T-cell (primary cell): ENCODE measurements at regions of chrX and their contacts with region 1.

Region 1: DNA sequence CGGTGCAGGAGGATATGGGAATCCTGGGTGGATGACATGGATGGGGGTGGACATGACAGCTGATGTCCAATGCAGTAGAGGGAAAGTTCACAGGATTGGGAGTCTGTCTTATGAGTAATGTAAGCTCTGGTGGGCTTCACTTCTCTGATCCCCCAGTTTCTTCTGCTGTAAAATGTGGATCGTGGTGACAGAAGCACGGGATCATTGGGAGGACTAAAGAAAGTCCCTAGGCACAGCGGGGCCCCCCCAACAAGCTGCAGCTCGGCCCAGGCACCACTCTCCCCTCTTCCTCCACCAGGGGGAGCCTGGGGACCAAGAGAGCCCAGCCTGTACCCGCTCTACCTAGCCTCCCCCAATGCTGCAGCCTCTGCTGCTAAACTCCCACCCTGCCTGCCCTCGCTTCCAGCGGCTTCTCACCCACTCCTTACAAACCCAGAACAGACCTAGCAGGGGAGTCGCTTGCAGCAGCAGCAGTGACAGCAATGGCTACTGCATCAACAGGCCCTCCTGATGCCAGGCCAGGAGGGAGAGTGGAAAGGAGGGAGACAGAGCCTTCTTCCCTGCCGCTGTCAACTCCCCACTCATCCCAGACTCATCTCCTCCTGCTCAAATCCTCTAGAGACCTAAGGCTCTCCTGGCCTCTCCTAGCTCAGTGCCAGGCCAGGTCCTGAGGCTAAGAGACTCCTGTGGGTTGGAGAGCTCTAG is 36.1 kb upstream of the IQSEC2 start:
- DNase-seq: peak; percentile 48 to 78 (median 62)
- ATAC-seq: peak; percentile 71 to 83 (median 74)
- H3K4me3 ChIP-seq: no peak overlapping the region
- H3K4me3 Mint-ChIP-seq: no peak overlapping the region
- H3K27ac ChIP-seq: no peak overlapping the region
- H3K27ac Mint-ChIP-seq: no peak overlapping the region
- H3K4me1 ChIP-seq: peaks cover 0 to 25% of the 10 kb centered on the region in 2 experiments
- H3K4me1 Mint-ChIP-seq: peaks cover 20 to 34% (median 22%) of the 10 kb centered on the region in 3 donors
- H3K27me3 ChIP-seq: peaks cover 5 to 40% of the 10 kb centered on the region in 2 experiments
- H3K27me3 Mint-ChIP-seq: peaks cover 33 to 50% of the 10 kb centered on the region in 2 donors

Region 2: GRCh38 chrX:53116101-53116500 is 201.4 kb before region 1 on chrX:
- CTCF ChIA-PET with region 1: interaction called in 1 of 2 experiments, 12 read pairs
- POLR2A ChIA-PET with region 1: no interaction called
- DNase-seq: no peak
- ATAC-seq: no peak
- H3K4me3 ChIP-seq: no peak overlapping the region
- H3K4me3 Mint-ChIP-seq: no peak overlapping the region
- H3K27ac ChIP-seq: no peak overlapping the region
- H3K27ac Mint-ChIP-seq: no peak overlapping the region
- H3K4me1 ChIP-seq: no peaks in the 10 kb centered on the region
- H3K4me1 Mint-ChIP-seq: peaks cover 0 to 8% (median 4%) of the 10 kb centered on the region in 3 donors
- H3K27me3 ChIP-seq: no peaks in the 10 kb centered on the region
- H3K27me3 Mint-ChIP-seq: no peaks in the 10 kb centered on the region

Region 3: DNA sequence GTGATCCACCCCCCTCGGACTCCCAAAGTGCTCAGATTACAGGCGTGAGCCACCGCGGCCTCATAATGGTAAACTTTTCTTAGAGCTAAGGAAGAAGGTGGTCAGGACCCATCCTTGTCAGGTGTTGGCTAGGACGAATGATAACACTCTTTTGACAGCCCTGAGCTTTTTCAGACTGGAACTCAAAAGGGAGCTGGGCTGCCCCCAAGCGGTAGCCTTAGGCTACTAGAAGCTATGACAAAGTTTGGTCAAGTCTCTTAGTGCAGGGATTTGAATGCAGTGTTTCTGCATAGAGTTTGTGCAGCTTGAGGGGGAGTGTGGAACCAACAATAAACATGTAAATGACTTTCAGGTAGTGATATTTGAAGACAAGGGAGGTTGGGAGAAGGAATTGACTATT is 128.5 kb after region 1 on chrX:
- CTCF ChIA-PET with region 1: interaction called, 3 to 10 read pairs
- POLR2A ChIA-PET with region 1: interaction called in 1 of 2 experiments, 3 read pairs
- DNase-seq: peak in 26 of 35 experiments; percentile 7 to 56 (median 34)
- ATAC-seq: peak in 2 of 4 experiments; percentile 29 to 50
- H3K4me3 ChIP-seq: no peak overlapping the region
- H3K4me3 Mint-ChIP-seq: no peak overlapping the region
- H3K27ac ChIP-seq: no peak overlapping the region
- H3K27ac Mint-ChIP-seq: no peak overlapping the region
- H3K4me1 ChIP-seq: peaks cover 0 to 12% of the 10 kb centered on the region in 2 experiments
- H3K4me1 Mint-ChIP-seq: peaks cover 0 to 10% (median 5%) of the 10 kb centered on the region in 3 donors
- H3K27me3 ChIP-seq: peaks cover 0 to 4% of the 10 kb centered on the region in 2 experiments
- H3K27me3 Mint-ChIP-seq: peaks cover 0 to 8% of the 10 kb centered on the region in 2 donors

Region 4: DNA sequence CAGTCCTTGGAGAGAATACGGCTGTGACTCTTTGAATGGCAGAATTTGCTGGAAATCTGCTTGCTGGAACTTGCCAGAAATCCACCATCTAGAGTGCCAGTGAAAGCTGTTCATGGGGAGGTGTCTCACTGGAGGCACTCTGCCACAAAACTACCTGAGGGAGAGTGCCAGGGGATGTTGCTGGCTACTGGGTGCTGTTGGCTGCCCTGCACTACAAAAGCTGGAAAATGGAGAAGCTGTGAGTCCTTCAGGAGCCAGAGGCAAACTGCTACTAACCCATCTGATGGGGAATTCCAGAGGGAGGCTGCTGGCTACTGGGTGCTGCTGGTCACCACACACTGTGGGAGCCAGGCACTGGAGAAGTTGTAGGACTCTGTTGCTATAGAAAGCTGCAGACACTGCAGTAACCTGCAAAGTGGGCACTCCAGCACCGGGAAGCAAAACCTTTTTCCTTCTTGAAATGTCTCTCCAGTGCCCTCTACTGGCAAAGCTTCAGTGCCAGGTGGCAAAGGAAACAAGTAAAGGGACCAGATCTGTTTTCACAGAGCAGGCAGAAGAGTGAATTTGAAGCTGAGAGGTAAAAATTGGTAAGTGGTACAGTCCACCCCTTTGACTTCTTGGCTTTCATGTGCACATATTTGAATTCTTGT is 164.4 kb after region 1 on chrX:
- CTCF ChIA-PET with region 1: interaction called, 10 to 16 read pairs
- POLR2A ChIA-PET with region 1: no interaction called
- DNase-seq: peak in 33 of 35 experiments; percentile 2 to 68 (median 27)
- ATAC-seq: peak in 3 of 4 experiments; percentile 30 to 37 (median 35)
- H3K4me3 ChIP-seq: no peak overlapping the region
- H3K4me3 Mint-ChIP-seq: no peak overlapping the region
- H3K27ac ChIP-seq: no peak overlapping the region
- H3K27ac Mint-ChIP-seq: no peak overlapping the region
- H3K4me1 ChIP-seq: peaks cover 0 to 3% of the 10 kb centered on the region in 2 experiments
- H3K4me1 Mint-ChIP-seq: peaks cover 0 to 7% (median 0%) of the 10 kb centered on the region in 3 donors
- H3K27me3 ChIP-seq: peaks cover 0 to 9% of the 10 kb centered on the region in 2 experiments
- H3K27me3 Mint-ChIP-seq: peaks cover 0 to 40% of the 10 kb centered on the region in 2 donors